ENCODE measurements at regions of chr1 and their contacts with region 1.

Region 1: GRCh38 chr1:49340571-49340970 is 563.9 kb upstream of the BEND5 start:
- DNase-seq: no peak
- ATAC-seq: no peak
- H3K4me3 ChIP-seq: no peak overlapping the region
- H3K27ac ChIP-seq: no peak overlapping the region
- H3K4me1 ChIP-seq: no peaks in the 10 kb centered on the region
- H3K27me3 ChIP-seq: no peaks in the 10 kb centered on the region
- CTCF ChIP-seq: no peak

Region 2: GRCh38 chr1:49229555-49229954 is 111.0 kb before region 1 on chr1:
- intact Hi-C with region 1: loop called (anchors 5 kb)
- DNase-seq: no peak
- ATAC-seq: no peak
- H3K4me3 ChIP-seq: no peak overlapping the region
- H3K27ac ChIP-seq: no peak overlapping the region
- H3K4me1 ChIP-seq: no peaks in the 10 kb centered on the region
- H3K27me3 ChIP-seq: no peaks in the 10 kb centered on the region
- CTCF ChIP-seq: no peak

Region 3: DNA sequence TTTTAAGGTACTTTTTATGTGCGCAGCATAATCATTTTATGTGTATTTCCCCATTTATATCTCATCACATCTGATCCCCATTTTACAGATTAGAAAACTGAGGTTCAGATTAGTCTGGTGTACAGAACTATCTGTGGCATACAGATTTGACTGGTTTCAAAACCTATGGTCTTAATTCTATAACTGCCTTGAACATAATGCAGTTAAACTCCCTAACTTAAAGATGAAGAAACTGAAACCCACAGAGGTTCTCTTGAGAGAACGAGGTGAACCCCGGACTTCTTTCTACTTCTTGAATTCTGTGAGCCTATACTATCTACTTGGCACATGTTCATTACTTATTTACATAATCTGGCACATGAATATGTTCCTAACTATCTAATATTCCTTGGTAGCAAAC is 204.0 kb after region 1 on chr1:
- intact Hi-C with region 1: no loop called
- DNase-seq: no peak
- ATAC-seq: no peak
- H3K4me3 ChIP-seq: no peak overlapping the region
- H3K27ac ChIP-seq: no peak overlapping the region
- H3K4me1 ChIP-seq: no peaks in the 10 kb centered on the region
- H3K27me3 ChIP-seq: no peaks in the 10 kb centered on the region
- CTCF ChIP-seq: no peak

Measured in upper lobe of right lung (tissue), 1 donor.